ENCODE measurements at regions of chr16 and their contacts with region 1.

Region 1: GRCh38 chr16:75622761-75623605 is at the start of gene ADAT1:
- DNase-seq: peak; percentile 98
- ATAC-seq: peak; percentile 94
- H3K4me3 ChIP-seq: peak within 1 kb of the TSS; percentile 68 to 85 (median 80)
- H3K4me3 Mint-ChIP-seq: peak within 1 kb of the TSS; percentile 96
- H3K27ac ChIP-seq: peak within 1 kb of the TSS; percentile 87 to 91
- H3K27ac Mint-ChIP-seq: peak within 1 kb of the TSS; percentile 98
- H3K4me1 ChIP-seq: peaks cover 12 to 27% of the 10 kb centered on the region in 2 donors
- H3K4me1 Mint-ChIP-seq: peaks cover 27% of the 10 kb centered on the region
- H3K27me3 ChIP-seq: no peaks in the 10 kb centered on the region
- H3K27me3 Mint-ChIP-seq: no peaks in the 10 kb centered on the region
- CTCF ChIP-seq: no peak
- total RNA-seq, gene ADAT1: 71.2 and 75.2 TPM in 2 replicates

Region 2: GRCh38 chr16:75148311-75149195 is 474.4 kb before region 1 on chr16 and contains the start of gene ZFP1:
- CTCF ChIA-PET with region 1: no interaction called
- POLR2A ChIA-PET with region 1: no interaction called
- intact Hi-C with region 1: loop called (anchors 1 kb)
- DNase-seq: peak; percentile 95
- ATAC-seq: peak; percentile 86
- H3K4me3 ChIP-seq: peak within 1 kb of the TSS; percentile 54 to 97 (median 95)
- H3K4me3 Mint-ChIP-seq: peak within 1 kb of the TSS; percentile 89
- H3K27ac ChIP-seq: peak within 1 kb of the TSS; percentile 86 to 90
- H3K27ac Mint-ChIP-seq: peak within 1 kb of the TSS; percentile 90
- H3K4me1 ChIP-seq: peaks cover 5 to 7% of the 10 kb centered on the region in 2 donors
- H3K4me1 Mint-ChIP-seq: peaks cover 20% of the 10 kb centered on the region
- H3K27me3 ChIP-seq: peaks cover 0 to 2% (median 0%) of the 10 kb centered on the region in 4 experiments
- H3K27me3 Mint-ChIP-seq: no peaks in the 10 kb centered on the region
- CTCF ChIP-seq: no peak
- total RNA-seq, gene ZFP1: 13.4 and 14.1 TPM in 2 replicates

Region 3: GRCh38 chr16:75471723-75472633 is 151.0 kb before region 1 on chr16:
- CTCF ChIA-PET with region 1: interaction called, 4 read pairs
- POLR2A ChIA-PET with region 1: no interaction called
- intact Hi-C with region 1: loop called (anchors 1 kb)
- DNase-seq: peak; percentile 61
- ATAC-seq: peak; percentile 87
- H3K4me3 ChIP-seq: no peak overlapping the region
- H3K4me3 Mint-ChIP-seq: no peak overlapping the region
- H3K27ac ChIP-seq: no peak overlapping the region
- H3K27ac Mint-ChIP-seq: no peak overlapping the region
- H3K4me1 ChIP-seq: peaks cover 0 to 8% of the 10 kb centered on the region in 2 donors
- H3K4me1 Mint-ChIP-seq: peaks cover 2% of the 10 kb centered on the region
- H3K27me3 ChIP-seq: no peaks in the 10 kb centered on the region
- H3K27me3 Mint-ChIP-seq: no peaks in the 10 kb centered on the region
- CTCF ChIP-seq: peak; percentile 78

Region 4: DNA sequence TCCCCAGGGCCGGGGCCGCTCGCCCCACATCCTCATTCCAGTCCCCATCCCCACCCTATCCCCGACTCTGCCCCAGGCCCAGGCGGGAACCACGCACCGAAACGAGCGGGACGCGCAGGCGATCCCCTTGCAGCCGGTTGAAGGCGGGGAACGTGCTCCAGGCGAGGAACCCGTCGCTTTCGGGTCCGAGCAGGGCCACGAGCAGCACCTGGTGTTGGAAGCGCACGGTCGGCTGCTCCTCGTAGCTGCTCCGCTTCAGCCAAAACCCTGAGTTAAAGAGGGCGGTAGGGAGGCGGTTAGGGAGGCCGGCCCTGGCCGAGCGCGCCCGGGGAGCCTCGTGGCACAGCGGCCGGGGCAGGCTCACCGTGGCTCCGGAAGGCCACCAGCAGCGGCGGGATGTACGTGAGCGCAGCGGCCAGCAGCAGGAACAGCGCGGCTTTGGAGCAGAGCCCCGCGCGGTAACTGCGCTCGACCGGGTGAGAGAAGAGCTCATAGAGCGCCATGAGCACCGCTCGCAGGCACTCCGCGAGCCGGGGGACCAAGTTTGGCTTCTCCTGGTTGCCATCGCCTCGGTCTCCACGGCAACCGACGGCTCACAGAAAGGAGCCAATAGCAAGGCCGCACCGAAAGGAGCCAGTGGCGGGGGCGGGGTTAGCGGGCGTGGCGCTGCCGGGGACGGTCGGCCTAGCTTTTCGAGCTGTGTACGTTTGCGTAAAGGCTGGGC is 67.1 kb before region 1 on chr16 and contains the start of gene TMEM231:
- CTCF ChIA-PET with region 1: interaction called, 5 read pairs
- POLR2A ChIA-PET with region 1: interaction called, 5 read pairs
- intact Hi-C with region 1: loop called (anchors 1 kb)
- DNase-seq: peak; percentile 96
- ATAC-seq: peak; percentile 93
- H3K4me3 ChIP-seq: peak within 1 kb of the TSS; percentile 34 to 78 (median 71)
- H3K4me3 Mint-ChIP-seq: peak within 1 kb of the TSS; percentile 97
- H3K27ac ChIP-seq: peak within 1 kb of the TSS; percentile 9 to 76
- H3K27ac Mint-ChIP-seq: peak within 1 kb of the TSS; percentile 88
- H3K4me1 ChIP-seq: peaks cover 9 to 16% of the 10 kb centered on the region in 2 donors
- H3K4me1 Mint-ChIP-seq: peaks cover 10% of the 10 kb centered on the region
- H3K27me3 ChIP-seq: peaks cover 0 to 8% (median 0%) of the 10 kb centered on the region in 4 experiments
- H3K27me3 Mint-ChIP-seq: no peaks in the 10 kb centered on the region
- CTCF ChIP-seq: peak; percentile 17
- total RNA-seq, gene TMEM231: 4.7 and 6.0 TPM in 2 replicates

Region 5: GRCh38 chr16:75566040-75566810 is 56.8 kb before region 1 on chr16 and contains the start of gene GABARAPL2:
- CTCF ChIA-PET with region 1: interaction called, 6 read pairs
- POLR2A ChIA-PET with region 1: interaction called, 10 read pairs
- intact Hi-C with region 1: loop called (anchors 1 kb)
- DNase-seq: peak; percentile 97
- ATAC-seq: peak; percentile 70
- H3K4me3 ChIP-seq: peak within 1 kb of the TSS; percentile 75 to 96 (median 95)
- H3K4me3 Mint-ChIP-seq: peak within 1 kb of the TSS; percentile 100
- H3K27ac ChIP-seq: peak within 1 kb of the TSS; percentile 96 to 99
- H3K27ac Mint-ChIP-seq: peak within 1 kb of the TSS; percentile 97
- H3K4me1 ChIP-seq: peaks cover 44 to 61% of the 10 kb centered on the region in 2 donors
- H3K4me1 Mint-ChIP-seq: peaks cover 53% of the 10 kb centered on the region
- H3K27me3 ChIP-seq: no peaks in the 10 kb centered on the region
- H3K27me3 Mint-ChIP-seq: no peaks in the 10 kb centered on the region
- CTCF ChIP-seq: no peak
- total RNA-seq, gene GABARAPL2: 84.8 and 84.9 TPM in 2 replicates

Measured in B cell (primary cell).